ENCODE measurements at regions of chr12 and their contacts with region 1.

Region 1: GRCh38 chr12:61023231-61023630 is 1237.0 kb upstream of the USP15 start:
- DNase-seq: no peak
- ATAC-seq: no peak
- H3K4me3 Mint-ChIP-seq: no peak overlapping the region
- H3K27ac Mint-ChIP-seq: no peak overlapping the region
- H3K4me1 Mint-ChIP-seq: no peaks in the 10 kb centered on the region
- H3K27me3 Mint-ChIP-seq: no peaks in the 10 kb centered on the region

Region 2: GRCh38 chr12:60967128-60967527 is 56.1 kb before region 1 on chr12:
- CTCF ChIA-PET with region 1: no interaction called
- POLR2A ChIA-PET with region 1: no interaction called
- intact Hi-C with region 1: no loop called
- DNase-seq: no peak
- ATAC-seq: no peak
- H3K4me3 Mint-ChIP-seq: no peak overlapping the region
- H3K27ac Mint-ChIP-seq: no peak overlapping the region
- H3K4me1 Mint-ChIP-seq: no peaks in the 10 kb centered on the region
- H3K27me3 Mint-ChIP-seq: no peaks in the 10 kb centered on the region

Region 3: GRCh38 chr12:60992087-60992486 is 31.1 kb before region 1 on chr12:
- CTCF ChIA-PET with region 1: no interaction called
- POLR2A ChIA-PET with region 1: no interaction called
- intact Hi-C with region 1: loop called in 1 of 2 experiments (anchors 1 kb)
- DNase-seq: no peak
- ATAC-seq: no peak
- H3K4me3 Mint-ChIP-seq: no peak overlapping the region
- H3K27ac Mint-ChIP-seq: no peak overlapping the region
- H3K4me1 Mint-ChIP-seq: no peaks in the 10 kb centered on the region
- H3K27me3 Mint-ChIP-seq: no peaks in the 10 kb centered on the region

Region 4: DNA sequence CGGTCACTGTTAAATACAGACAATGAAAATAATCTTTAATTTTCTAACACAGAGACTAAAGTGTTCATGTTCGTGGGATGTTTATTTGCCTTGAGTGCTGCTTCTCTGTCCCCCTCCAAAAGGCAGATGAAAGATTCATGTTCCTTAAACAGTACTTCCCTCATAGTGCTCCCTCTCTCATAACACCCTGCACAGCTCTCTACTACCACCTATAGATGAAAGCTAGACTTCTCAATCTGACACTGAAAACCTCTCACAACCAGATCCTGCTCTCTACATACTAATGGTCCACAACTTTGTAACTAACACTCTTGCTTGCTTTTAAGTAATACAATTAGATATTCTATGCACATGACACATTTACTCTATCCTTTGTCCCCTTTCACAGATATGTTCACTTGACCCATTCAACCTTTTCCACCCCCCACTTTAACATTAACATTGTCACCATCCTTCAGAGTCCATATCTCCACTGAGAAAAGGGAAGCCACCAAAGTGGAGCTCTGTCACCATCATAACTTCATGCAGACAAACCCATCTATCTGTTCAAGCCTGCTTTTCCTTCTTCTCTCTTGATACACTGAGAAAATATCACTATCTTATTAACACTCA is 970.6 kb after region 1 on chr12:
- CTCF ChIA-PET with region 1: no interaction called
- POLR2A ChIA-PET with region 1: no interaction called
- intact Hi-C with region 1: no loop called
- DNase-seq: no peak
- ATAC-seq: peak; percentile 49
- H3K4me3 Mint-ChIP-seq: no peak overlapping the region
- H3K27ac Mint-ChIP-seq: no peak overlapping the region
- H3K4me1 Mint-ChIP-seq: no peaks in the 10 kb centered on the region
- H3K27me3 Mint-ChIP-seq: peaks cover 3% of the 10 kb centered on the region